ENCODE measurements at regions of chr3 and their contacts with region 1.

Region 1: DNA sequence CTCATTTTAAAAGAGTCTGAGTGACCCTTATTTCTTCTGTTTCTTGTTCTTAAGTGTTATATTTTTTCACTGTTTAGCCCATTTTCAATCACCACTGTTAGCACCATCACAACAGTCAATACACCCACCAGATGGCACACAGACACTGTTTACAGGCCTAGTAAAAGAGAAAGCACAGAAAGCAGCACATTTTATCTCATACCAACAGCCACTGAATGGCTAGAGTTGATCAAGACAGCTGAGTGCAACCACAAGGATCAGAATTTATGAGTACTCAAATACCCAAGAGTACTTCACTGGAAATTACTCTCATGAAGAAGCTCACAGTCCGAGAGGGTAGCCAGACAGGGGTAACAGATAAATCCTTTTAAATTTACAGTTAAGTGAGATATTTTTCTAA is 127.0 kb downstream of the TFDP2 start:
- DNase-seq: peak; percentile 45
- ATAC-seq: peak; percentile 90
- H3K4me3 ChIP-seq: 0 out of 2 replicates have a peak overlapping the region, but pooled peaks have one; percentile 14
- H3K27ac ChIP-seq: no peak overlapping the region
- H3K4me1 ChIP-seq: peaks cover 14% of the 10 kb centered on the region
- H3K27me3 ChIP-seq: no peaks in the 10 kb centered on the region
- CTCF ChIP-seq: peak; percentile 43 to 81 (median 44); a peak in 4 of 6 replicates
- EP300 ChIP-seq: no peak
- POLR2A ChIP-seq: no peak
- RAD21 ChIP-seq: peak; percentile 74

Region 2: DNA sequence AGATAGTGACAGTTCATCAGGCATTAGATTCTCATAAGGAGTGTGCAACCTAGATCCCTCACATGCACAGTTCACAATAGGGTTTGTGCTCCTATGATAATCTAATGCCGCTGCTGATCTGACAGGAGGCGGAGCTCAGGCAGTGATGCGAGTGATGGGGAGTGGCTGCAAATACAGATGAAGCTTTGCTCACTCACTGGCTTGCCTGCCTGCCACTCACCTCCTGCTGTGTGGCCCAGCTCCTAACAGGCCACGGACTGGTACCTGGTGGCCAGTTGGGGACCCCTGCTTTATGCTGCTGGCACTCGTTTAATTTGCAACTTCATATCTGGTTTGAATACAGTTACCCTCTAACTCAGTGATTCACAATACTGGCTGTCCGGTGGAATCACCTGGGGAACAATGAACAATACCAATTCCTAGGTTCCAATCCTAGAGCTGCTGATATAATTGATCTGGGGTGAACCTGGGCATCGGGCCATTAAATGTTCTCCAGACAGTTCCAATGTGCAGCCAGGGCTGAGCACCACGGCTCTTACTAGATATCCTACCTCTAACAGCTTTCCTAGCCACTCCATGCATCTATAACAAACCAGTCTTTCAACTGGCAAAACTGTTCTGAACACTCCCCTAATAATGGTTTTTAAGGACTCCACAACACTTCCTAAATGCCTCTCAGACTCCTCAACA is 14.5 kb before region 1 on chr3:
- CTCF ChIA-PET with region 1: interaction called, 4 read pairs
- POLR2A ChIA-PET with region 1: interaction called, 10 read pairs
- RAD21 ChIA-PET with region 1: interaction called, 6 read pairs
- SMC1A ChIA-PET with region 1: interaction called, 5 read pairs
- in situ Hi-C with region 1: no loop called
- intact Hi-C with region 1: no loop called
- DNase-seq: no peak
- ATAC-seq: no peak
- H3K4me3 ChIP-seq: no peak overlapping the region
- H3K27ac ChIP-seq: no peak overlapping the region
- H3K4me1 ChIP-seq: no peaks in the 10 kb centered on the region
- H3K27me3 ChIP-seq: no peaks in the 10 kb centered on the region
- CTCF ChIP-seq: no peak
- EP300 ChIP-seq: no peak
- POLR2A ChIP-seq: no peak
- RAD21 ChIP-seq: no peak

Region 3: GRCh38 chr3:142134799-142135325 is 112.5 kb after region 1 on chr3:
- CTCF ChIA-PET with region 1: interaction called, 15 read pairs
- POLR2A ChIA-PET with region 1: no interaction called
- RAD21 ChIA-PET with region 1: interaction called, 10 read pairs
- SMC1A ChIA-PET with region 1: interaction called, 4 read pairs
- in situ Hi-C with region 1: no loop called
- intact Hi-C with region 1: no loop called
- DNase-seq: no peak
- ATAC-seq: no peak
- H3K4me3 ChIP-seq: no peak overlapping the region
- H3K27ac ChIP-seq: no peak overlapping the region
- H3K4me1 ChIP-seq: no peaks in the 10 kb centered on the region
- H3K27me3 ChIP-seq: no peaks in the 10 kb centered on the region
- CTCF ChIP-seq: no peak
- EP300 ChIP-seq: no peak
- POLR2A ChIP-seq: no peak
- RAD21 ChIP-seq: no peak

Region 4: DNA sequence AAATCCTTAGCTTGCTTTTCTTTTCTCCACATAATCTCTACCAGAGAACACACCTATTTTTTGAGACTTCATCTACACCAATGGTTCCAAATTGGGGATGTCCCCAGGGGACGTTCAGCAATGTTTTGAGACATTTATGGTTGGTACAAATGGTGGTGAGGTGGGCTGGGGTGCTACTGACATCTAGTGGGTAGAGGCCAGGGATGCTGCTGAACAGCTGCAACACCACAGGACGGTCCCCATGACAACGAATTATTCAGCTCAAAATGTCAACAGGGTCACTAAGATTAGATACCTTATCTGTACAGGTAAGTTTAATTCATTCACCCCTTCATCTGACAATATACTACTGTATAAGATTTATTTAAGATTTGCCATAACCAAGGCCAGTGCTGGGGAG is 188.7 kb after region 1 on chr3:
- CTCF ChIA-PET with region 1: interaction called, 7 read pairs
- POLR2A ChIA-PET with region 1: no interaction called
- RAD21 ChIA-PET with region 1: no interaction called
- SMC1A ChIA-PET with region 1: interaction called, 3 read pairs
- in situ Hi-C with region 1: no loop called
- intact Hi-C with region 1: loop called (anchors 5 kb)
- DNase-seq: no peak
- ATAC-seq: peak; percentile 73
- H3K4me3 ChIP-seq: no peak overlapping the region
- H3K27ac ChIP-seq: no peak overlapping the region
- H3K4me1 ChIP-seq: no peaks in the 10 kb centered on the region
- H3K27me3 ChIP-seq: no peaks in the 10 kb centered on the region
- CTCF ChIP-seq: peak; percentile 35 to 40 (median 37); a peak in 4 of 6 replicates
- EP300 ChIP-seq: no peak
- POLR2A ChIP-seq: no peak
- RAD21 ChIP-seq: peak; percentile 50

Measured in GM12878 (cell line).